AG04450 (cell line): ENCODE measurements at regions of chr3 and their contacts with region 1.

Region 1: GRCh38 chr3:120795017-120795648 is 52.6 kb downstream of the GTF2E1 start:
- DNase-seq: peak; percentile 42
- H3K4me3 ChIP-seq: no peak overlapping the region
- H3K27ac ChIP-seq: no peak overlapping the region
- H3K27me3 ChIP-seq: no peaks in the 10 kb centered on the region
- CTCF ChIP-seq: peak; percentile 83

Region 2: DNA sequence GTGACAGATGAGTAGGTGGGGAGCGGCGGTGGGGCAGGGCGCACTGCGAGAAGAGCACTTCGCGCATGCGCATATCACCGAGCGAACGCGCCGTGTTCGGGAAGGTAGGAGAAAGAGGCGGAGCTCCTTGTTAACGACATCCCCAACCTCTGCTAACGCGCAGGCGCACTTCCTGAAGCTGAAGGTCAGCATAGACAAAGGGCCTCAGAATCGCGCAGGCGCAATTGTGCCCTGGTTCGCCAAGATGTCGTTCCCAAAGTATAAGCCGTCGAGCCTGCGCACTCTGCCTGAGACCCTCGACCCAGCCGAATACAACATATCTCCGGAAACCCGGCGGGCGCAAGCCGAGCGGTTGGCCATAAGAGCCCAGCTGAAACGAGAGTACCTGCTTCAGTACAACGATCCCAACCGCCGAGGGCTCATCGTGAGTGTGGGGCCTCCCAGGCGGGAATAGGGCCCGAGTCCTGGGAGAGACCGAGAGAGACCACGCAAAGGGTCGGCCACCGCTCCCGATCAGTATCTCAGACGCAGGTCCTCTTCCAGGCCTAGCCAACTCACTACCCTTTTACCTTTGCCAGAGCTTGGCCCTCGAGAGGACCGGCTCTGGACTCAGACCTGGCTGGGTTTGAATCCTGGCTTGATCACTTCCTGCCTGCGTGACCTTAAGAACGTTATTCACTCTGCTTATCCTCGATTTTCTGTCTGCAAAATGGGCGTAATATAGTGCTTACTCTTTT is 198.8 kb before region 1 on chr3 and contains the start of gene NDUFB4:
- CTCF ChIA-PET with region 1: interaction called, 41 read pairs
- POLR2A ChIA-PET with region 1: interaction called, 4 read pairs
- DNase-seq: peak; percentile 98
- H3K4me3 ChIP-seq: peak within 1 kb of the TSS; percentile 85
- H3K27ac ChIP-seq: peak within 1 kb of the TSS; percentile 88
- H3K27me3 ChIP-seq: no peaks in the 10 kb centered on the region
- CTCF ChIP-seq: no peak
- polyA plus RNA-seq, gene NDUFB4: 174 and 183 TPM in 2 replicates

Region 3: GRCh38 chr3:120753831-120754230 is 41.3 kb before region 1 on chr3:
- CTCF ChIA-PET with region 1: interaction called, 20 read pairs
- POLR2A ChIA-PET with region 1: no interaction called
- DNase-seq: no peak
- H3K4me3 ChIP-seq: no peak overlapping the region
- H3K27ac ChIP-seq: no peak overlapping the region
- H3K27me3 ChIP-seq: no peaks in the 10 kb centered on the region
- CTCF ChIP-seq: no peak

Region 4: GRCh38 chr3:120773932-120774331 is 21.2 kb before region 1 on chr3:
- CTCF ChIA-PET with region 1: interaction called, 41 read pairs
- POLR2A ChIA-PET with region 1: no interaction called
- DNase-seq: no peak
- H3K4me3 ChIP-seq: no peak overlapping the region
- H3K27ac ChIP-seq: no peak overlapping the region
- H3K27me3 ChIP-seq: no peaks in the 10 kb centered on the region
- CTCF ChIP-seq: no peak

Region 5: GRCh38 chr3:120816728-120817127 is 21.6 kb after region 1 on chr3:
- CTCF ChIA-PET with region 1: interaction called, 26 read pairs
- POLR2A ChIA-PET with region 1: no interaction called
- DNase-seq: no peak
- H3K4me3 ChIP-seq: no peak overlapping the region
- H3K27ac ChIP-seq: no peak overlapping the region
- H3K27me3 ChIP-seq: peaks cover 6% of the 10 kb centered on the region
- CTCF ChIP-seq: no peak

Region 6: GRCh38 chr3:121018917-121019321 is 223.8 kb after region 1 on chr3:
- CTCF ChIA-PET with region 1: no interaction called
- POLR2A ChIA-PET with region 1: no interaction called
- DNase-seq: no peak
- H3K4me3 ChIP-seq: no peak overlapping the region
- H3K27ac ChIP-seq: no peak overlapping the region
- H3K27me3 ChIP-seq: no peaks in the 10 kb centered on the region
- CTCF ChIP-seq: no peak